ENCODE measurements at regions of chr7 and their contacts with region 1.

Region 1: GRCh38 chr7:116122972-116123595 is 87.3 kb upstream of the TES start:
- DNase-seq: no peak
- ATAC-seq: no peak
- H3K4me3 ChIP-seq: no peak overlapping the region
- H3K27ac ChIP-seq: no peak overlapping the region
- H3K4me1 ChIP-seq: no peaks in the 10 kb centered on the region
- H3K27me3 ChIP-seq: no peaks in the 10 kb centered on the region
- CTCF ChIP-seq: peak; percentile 34

Region 2: DNA sequence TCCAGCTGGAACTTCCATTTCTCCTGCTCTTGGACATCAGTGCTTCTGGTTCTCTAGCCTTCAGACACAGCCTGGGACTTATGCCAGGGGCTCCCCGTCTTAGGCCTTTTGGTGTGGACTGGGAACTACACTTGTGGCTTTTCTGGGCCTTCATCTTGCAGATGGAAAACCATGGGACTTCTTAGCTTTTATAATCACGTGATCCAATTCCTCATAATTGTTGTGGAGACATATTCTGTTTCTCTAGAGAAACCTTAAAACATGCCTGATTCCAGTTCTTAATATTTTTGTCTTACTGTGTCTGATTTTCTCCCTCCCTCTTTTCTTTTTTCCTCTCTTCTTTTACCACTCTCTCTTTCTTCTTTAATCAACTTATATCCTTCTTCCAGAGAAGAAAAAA is 1932.7 kb before region 1 on chr7:
- intact Hi-C with region 1: loop called in 1 of 2 experiments (anchors 10 kb)
- DNase-seq: no peak
- ATAC-seq: no peak
- H3K4me3 ChIP-seq: no peak overlapping the region
- H3K27ac ChIP-seq: no peak overlapping the region
- H3K4me1 ChIP-seq: no peaks in the 10 kb centered on the region
- H3K27me3 ChIP-seq: no peaks in the 10 kb centered on the region
- CTCF ChIP-seq: no peak

Region 3: DNA sequence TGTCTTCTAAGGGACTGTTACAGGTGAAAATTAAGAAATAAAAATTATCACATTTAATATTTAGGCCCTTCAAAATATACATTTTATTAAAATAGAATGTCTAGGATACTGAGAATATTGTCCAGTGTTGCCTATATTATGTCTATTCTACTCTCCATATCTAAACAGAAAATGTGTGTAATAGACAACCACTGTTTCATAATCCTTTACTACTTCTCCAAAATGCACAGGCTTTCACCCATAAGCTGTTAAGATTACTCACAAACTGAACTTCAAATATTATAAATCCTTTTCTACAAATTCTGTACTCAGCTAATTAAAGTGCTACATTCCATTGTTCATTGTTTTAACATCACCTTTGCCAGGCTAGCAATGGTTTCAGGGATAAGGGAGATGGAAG is 35.8 kb before region 1 on chr7:
- intact Hi-C with region 1: no loop called
- DNase-seq: no peak
- ATAC-seq: no peak
- H3K4me3 ChIP-seq: no peak overlapping the region
- H3K27ac ChIP-seq: no peak overlapping the region
- H3K4me1 ChIP-seq: no peaks in the 10 kb centered on the region
- H3K27me3 ChIP-seq: no peaks in the 10 kb centered on the region
- CTCF ChIP-seq: no peak